ENCODE measurements at regions of chr1 and their contacts with region 1.

Region 1: DNA sequence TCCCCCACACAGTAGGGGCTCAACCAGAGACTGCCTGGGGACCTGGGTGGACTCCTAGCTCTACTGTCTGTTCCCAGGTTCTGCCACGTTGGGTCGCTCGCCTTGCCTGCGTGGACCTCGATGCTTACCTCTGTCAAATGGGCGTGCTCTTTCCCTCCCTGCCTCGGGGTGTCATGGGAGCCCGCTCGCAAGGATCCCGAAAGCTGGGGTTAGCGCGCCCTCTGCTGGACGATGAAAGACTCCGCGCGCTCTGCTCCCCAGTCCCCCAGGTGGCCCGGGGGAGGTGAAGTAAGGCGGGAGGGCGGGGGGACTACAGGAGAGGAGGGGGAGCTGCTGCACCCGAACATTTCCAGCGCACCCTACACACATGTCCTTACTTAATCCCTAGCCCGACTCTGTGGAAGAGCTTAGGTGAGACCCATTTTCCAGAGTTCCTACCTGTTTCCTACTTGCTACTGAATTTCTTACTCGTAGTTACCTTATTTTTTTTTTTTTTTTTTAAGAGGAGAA is 2.3 kb upstream of the BSND start:
- DNase-seq: peak; percentile 68 to 81 (median 80)
- H3K4me3 ChIP-seq: peak overlapping the region in 4 of 7 experiments; percentile 14 to 63 (median 57)
- H3K27ac ChIP-seq: no peak overlapping the region
- H3K4me1 ChIP-seq: peaks cover 0 to 10% (median 8%) of the 10 kb centered on the region in 4 experiments
- H3K27me3 ChIP-seq: peaks cover 0 to 62% (median 20%) of the 10 kb centered on the region in 5 experiments

Region 2: DNA sequence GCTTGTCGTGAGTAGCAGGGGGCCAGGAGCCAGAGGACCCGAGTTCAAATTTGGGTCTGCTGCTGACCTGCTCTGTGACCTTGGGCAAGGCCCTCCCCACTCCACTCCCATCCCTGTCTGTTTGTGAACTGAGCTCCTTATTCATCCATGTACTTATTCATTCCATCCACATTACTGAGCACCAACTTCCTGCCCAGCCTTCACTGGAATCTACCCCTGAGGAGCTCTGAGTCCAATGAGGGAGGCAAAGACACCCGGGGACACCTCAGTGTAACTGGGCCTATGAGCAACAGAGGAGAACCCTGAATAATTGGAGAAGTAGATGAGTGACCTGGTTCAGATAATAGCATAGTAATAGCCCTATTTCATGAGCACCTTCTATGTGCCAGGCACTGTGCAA is 11.2 kb after region 1 on chr1:
- CTCF ChIA-PET with region 1: interaction called, 12 read pairs
- POLR2A ChIA-PET with region 1: no interaction called
- DNase-seq: no peak
- H3K4me3 ChIP-seq: no peak overlapping the region
- H3K27ac ChIP-seq: no peak overlapping the region
- H3K4me1 ChIP-seq: no peaks in the 10 kb centered on the region
- H3K27me3 ChIP-seq: peaks cover 0 to 1% (median 0%) of the 10 kb centered on the region in 5 experiments